Sciatic nerve (tissue), 2 donors: ENCODE measurements at regions of chr3 and their contacts with region 1.

Region 1: DNA sequence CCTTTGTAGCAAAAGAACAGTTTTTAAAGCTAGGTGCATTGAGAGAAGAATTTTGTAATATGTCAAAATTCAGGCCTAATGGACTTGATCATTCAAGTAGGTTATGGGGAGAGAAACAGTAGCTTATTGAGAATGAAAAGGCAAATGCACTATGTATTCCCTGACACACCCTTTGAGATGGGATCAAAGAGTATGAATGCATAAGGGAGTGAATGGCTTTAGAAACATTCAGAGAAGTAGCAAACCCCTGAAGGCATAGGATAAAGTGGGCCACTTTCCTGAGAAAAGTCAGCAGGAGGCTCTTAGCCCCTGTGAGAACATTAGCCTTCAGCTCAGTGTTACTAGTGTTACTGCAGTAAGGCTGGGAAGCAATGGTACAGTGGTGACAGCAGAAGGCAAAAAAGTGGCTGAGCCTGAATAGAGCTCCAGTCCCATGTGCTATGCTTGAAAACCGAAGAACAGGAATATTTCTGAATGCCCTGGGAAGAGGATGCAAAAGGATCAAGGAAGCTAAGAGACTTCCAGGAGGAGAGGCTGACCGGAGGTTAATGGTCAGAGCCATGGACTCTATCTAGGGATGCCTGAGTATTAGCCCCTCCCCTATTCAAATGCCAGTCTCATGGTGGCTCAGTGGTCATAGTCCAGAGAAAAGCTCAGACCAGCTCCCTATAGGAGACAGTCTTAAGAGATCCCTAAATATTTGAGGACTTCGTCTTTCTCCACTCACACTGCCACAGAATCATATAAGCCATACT is 218.2 kb upstream of the SGO1 start:
- DNase-seq: no peak
- ATAC-seq: no peak

Region 2: GRCh38 chr3:20246662-20247061 is 157.5 kb before region 1 on chr3:
- intact Hi-C with region 1: loop called (anchors 2 kb)
- DNase-seq: no peak
- ATAC-seq: no peak